HepG2 (cell line): ENCODE measurements at regions of chr2 and their contacts with region 1.

Region 1: GRCh38 chr2:232521959-232522622 is 1.9 kb downstream of the PRSS56 start:
- DNase-seq: no peak
- ATAC-seq: peak; percentile 39
- H3K4me3 ChIP-seq: peak overlapping the region in 1 of 3 experiments; percentile 33; a peak in 1 of 6 replicates
- H3K27ac ChIP-seq: no peak overlapping the region
- H3K4me1 ChIP-seq: peaks cover 32% of the 10 kb centered on the region
- H3K27me3 ChIP-seq: peaks cover 31 to 86% of the 10 kb centered on the region in 2 experiments
- CTCF ChIP-seq: peak; percentile 79
- EP300 ChIP-seq: no peak
- POLR2A ChIP-seq: no peak
- RAD21 ChIP-seq: peak; percentile 96

Region 2: GRCh38 chr2:232444409-232445148 is 77.5 kb before region 1 on chr2:
- CTCF ChIA-PET with region 1: interaction called, 3 read pairs
- POLR2A ChIA-PET with region 1: no interaction called
- in situ Hi-C with region 1: no loop called
- intact Hi-C with region 1: loop called (anchors 5 kb)
- DNase-seq: peak; percentile 56
- ATAC-seq: peak; percentile 32
- H3K4me3 ChIP-seq: peak overlapping the region; percentile 8 to 73 (median 18)
- H3K27ac ChIP-seq: no peak overlapping the region
- H3K4me1 ChIP-seq: peaks cover 28% of the 10 kb centered on the region
- H3K27me3 ChIP-seq: peaks cover 3 to 22% of the 10 kb centered on the region in 2 experiments; a peak in 4 of 5 replicates
- CTCF ChIP-seq: peak; percentile 63
- EP300 ChIP-seq: no peak
- POLR2A ChIP-seq: no peak
- RAD21 ChIP-seq: 0 out of 2 replicates have a peak, but pooled peaks have one; percentile 28

Region 3: DNA sequence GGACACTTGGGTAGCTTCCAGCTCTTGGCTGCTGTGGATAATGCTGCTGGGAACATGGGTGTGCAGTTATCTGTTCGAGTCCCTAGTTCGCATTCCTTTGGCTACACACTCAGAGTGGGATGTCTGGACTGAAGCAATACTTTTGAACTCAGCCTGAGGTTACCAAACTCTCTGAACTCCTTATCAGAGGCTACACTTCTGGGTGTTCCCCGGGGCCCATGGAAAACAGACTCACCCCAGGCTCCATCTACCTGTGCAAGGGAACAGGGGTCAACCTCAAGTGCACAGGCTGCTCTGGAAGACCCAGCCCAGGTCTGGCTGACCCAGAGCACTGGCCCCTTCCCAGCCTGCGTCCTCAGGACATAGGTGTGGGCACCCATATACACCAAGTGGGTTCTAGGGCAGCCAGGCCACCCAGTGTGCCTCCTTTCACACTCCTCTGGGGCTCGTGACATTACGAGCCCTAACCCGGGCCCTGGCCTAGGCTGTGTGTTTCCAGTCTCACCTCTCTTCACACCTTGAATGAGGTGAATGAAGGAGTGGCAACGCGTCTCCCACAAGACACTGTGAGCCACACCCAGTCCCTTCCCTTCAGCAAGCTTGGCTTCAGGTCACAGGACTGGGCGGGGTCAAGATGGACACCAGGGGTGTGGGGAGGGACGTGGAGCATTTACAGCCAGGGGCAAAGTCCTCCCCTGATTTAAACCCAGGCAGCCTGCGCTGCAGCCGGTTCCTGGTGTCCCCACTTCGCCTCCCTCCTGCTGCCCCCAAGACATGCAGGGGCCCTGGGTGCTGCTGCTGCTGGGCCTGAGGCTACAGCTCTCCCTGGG is 66.5 kb before region 1 on chr2 and contains the start of gene ALPI:
- CTCF ChIA-PET with region 1: no interaction called
- POLR2A ChIA-PET with region 1: no interaction called
- in situ Hi-C with region 1: loop called (anchors 5 kb)
- intact Hi-C with region 1: no loop called
- DNase-seq: no peak
- ATAC-seq: peak; percentile 9; the same call in 2 of the 3 replicates
- H3K4me3 ChIP-seq: no peak within 1 kb of the TSS
- H3K27ac ChIP-seq: no peak within 1 kb of the TSS
- H3K4me1 ChIP-seq: 0 out of 2 replicates have a peak, but pooled peaks cover 7% of the 10 kb centered on the region
- H3K27me3 ChIP-seq: peaks cover 9 to 61% of the 10 kb centered on the region in 2 experiments; a peak in 4 of 5 replicates
- CTCF ChIP-seq: no peak
- EP300 ChIP-seq: no peak
- POLR2A ChIP-seq: no peak
- RAD21 ChIP-seq: no peak
- total RNA-seq, gene ALPI: not detected in 2 replicates

Region 4: GRCh38 chr2:232479341-232480200 is 42.5 kb before region 1 on chr2:
- CTCF ChIA-PET with region 1: interaction called, 6 read pairs
- POLR2A ChIA-PET with region 1: no interaction called
- in situ Hi-C with region 1: no loop called
- intact Hi-C with region 1: loop called (anchors 5 kb)
- DNase-seq: peak; percentile 19
- ATAC-seq: peak; percentile 80
- H3K4me3 ChIP-seq: no peak overlapping the region
- H3K27ac ChIP-seq: no peak overlapping the region
- H3K4me1 ChIP-seq: no peaks in the 10 kb centered on the region
- H3K27me3 ChIP-seq: peaks cover 24 to 83% of the 10 kb centered on the region in 2 experiments
- CTCF ChIP-seq: peak; percentile 49
- EP300 ChIP-seq: no peak
- POLR2A ChIP-seq: no peak
- RAD21 ChIP-seq: no peak